Activated naive CD4-positive, alpha-beta T cell treated with anti-CD3 and anti-CD28 coated beads for 36 hours (primary cell): ENCODE measurements at regions of chr2 and their contacts with region 1.

Region 1: DNA sequence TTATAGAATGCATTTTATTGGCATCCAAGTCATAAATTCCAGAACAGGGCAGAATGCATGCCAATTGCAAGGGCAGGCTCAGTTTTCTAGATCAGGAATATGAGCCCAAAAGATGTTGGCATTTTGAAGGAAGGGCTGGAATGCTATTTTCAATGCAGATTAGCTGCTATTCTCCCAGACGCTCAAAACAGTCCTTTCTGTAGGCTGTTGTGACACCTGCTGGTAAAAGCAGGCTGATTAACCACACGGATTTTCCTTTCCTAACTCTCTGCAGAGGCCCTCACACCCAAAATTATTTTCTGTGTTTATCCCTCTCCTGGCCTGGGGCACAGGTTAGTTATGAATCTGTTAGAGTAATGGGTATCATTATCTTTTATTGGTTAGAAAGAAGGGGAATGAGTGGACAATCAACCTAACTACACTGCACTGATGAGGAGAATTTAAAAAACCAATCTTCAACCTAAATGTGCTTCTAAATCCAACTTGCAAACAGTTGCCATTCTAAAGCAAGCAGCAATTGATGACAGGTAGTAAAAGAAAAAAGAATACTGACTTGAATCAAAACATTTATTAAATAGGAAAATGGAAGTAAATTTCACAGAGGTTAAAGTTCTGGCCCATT is 94.0 kb downstream of the PLA2R1 start:
- DNase-seq: peak; percentile 56
- H3K4me3 Mint-ChIP-seq: no peak overlapping the region
- H3K27ac Mint-ChIP-seq: no peak overlapping the region
- H3K4me1 Mint-ChIP-seq: no peaks in the 10 kb centered on the region
- H3K27me3 Mint-ChIP-seq: no peaks in the 10 kb centered on the region

Region 2: DNA sequence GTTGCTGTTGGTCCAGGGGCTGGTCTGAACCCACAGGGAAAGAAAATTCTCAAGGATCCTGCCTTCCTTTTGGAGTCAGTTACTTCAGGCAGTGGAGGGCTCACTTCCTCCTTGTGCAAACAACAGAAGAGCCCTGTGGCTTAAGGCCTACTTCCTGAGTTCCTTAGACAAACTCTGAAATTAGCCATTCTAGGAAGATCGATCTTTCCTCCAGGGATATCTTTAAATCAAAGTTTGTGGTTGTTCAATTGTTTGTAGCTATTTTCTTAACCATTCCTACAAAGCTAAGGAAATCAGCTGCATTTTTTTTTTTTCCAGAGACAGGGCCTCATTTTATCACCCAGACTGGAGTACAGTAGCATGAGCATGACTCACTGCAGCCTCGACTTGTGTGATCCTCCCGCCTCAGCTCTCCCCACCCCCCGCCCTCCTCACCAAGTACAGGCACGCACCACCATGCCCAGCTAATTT is 843.9 kb before region 1 on chr2:
- CTCF ChIA-PET with region 1: interaction called, 3 read pairs
- intact Hi-C with region 1: loop called (anchors 2 kb)
- DNase-seq: peak; percentile 60
- H3K4me3 Mint-ChIP-seq: no peak overlapping the region
- H3K27ac Mint-ChIP-seq: peak overlapping the region; percentile 82
- H3K4me1 Mint-ChIP-seq: peaks cover 20% of the 10 kb centered on the region
- H3K27me3 Mint-ChIP-seq: no peaks in the 10 kb centered on the region

Region 3: GRCh38 chr2:159557451-159558034 is 410.8 kb before region 1 on chr2:
- CTCF ChIA-PET with region 1: no interaction called
- intact Hi-C with region 1: loop called (anchors 10 kb)
- DNase-seq: no peak
- H3K4me3 Mint-ChIP-seq: no peak overlapping the region
- H3K27ac Mint-ChIP-seq: no peak overlapping the region
- H3K4me1 Mint-ChIP-seq: no peaks in the 10 kb centered on the region
- H3K27me3 Mint-ChIP-seq: no peaks in the 10 kb centered on the region

Region 4: GRCh38 chr2:159755788-159756187 is 212.6 kb before region 1 on chr2:
- CTCF ChIA-PET with region 1: interaction called, 4 read pairs
- intact Hi-C with region 1: loop called (anchors 1 kb)
- DNase-seq: peak; percentile 54
- H3K4me3 Mint-ChIP-seq: no peak overlapping the region
- H3K27ac Mint-ChIP-seq: no peak overlapping the region
- H3K4me1 Mint-ChIP-seq: peaks cover 22% of the 10 kb centered on the region
- H3K27me3 Mint-ChIP-seq: no peaks in the 10 kb centered on the region

Region 5: GRCh38 chr2:159807183-159808031 is 161.0 kb before region 1 on chr2:
- CTCF ChIA-PET with region 1: interaction called, 4 read pairs
- intact Hi-C with region 1: loop called (anchors 5 kb)
- DNase-seq: peak; percentile 43
- H3K4me3 Mint-ChIP-seq: no peak overlapping the region
- H3K27ac Mint-ChIP-seq: no peak overlapping the region
- H3K4me1 Mint-ChIP-seq: peaks cover 6% of the 10 kb centered on the region
- H3K27me3 Mint-ChIP-seq: no peaks in the 10 kb centered on the region